Gastrocnemius medialis (tissue), 4 donors: ENCODE measurements at regions of chr16 and their contacts with region 1.

Region 1: DNA sequence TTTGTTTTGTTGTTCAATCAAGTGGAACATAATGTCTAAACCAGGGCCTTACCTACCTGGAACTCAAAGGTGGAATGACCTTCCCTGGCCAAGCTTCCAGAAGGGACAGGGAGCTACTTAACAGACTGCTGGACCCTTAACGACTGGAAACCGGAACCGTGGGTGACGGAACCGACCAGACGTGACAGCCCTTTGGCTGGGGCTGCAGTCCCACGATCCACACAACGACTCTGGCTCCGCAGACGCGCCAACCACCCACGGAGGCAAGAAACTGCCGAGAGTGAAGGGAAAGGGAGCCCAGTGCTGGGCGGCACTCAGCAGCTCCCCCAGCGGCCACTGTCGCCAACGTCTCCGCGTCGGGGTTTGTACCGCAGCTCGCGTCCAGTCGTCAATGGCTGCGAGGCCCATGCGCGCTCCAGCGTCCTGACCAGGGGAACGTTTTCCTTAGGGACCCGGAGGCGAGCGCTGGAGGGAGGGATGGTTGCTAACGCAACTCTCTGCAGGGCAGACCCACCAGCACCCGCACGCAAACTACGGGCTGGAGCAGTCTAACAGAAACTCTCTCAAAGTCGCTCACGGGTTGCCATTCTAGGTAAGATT is 5.5 kb upstream of the KIF22 start:
- DNase-seq: peak; percentile 37 to 57
- ATAC-seq: peak; percentile 76 to 83
- H3K4me3 ChIP-seq: peak overlapping the region; percentile 27 to 57 (median 35)
- H3K27ac ChIP-seq: no peak overlapping the region
- H3K4me1 ChIP-seq: peaks cover 6 to 15% of the 10 kb centered on the region in 2 donors
- H3K27me3 ChIP-seq: peaks cover 0 to 5% (median 0%) of the 10 kb centered on the region in 3 donors
- CTCF ChIP-seq: peak; percentile 71 to 90 (median 77)
- POLR2A ChIP-seq: no peak

Region 2: DNA sequence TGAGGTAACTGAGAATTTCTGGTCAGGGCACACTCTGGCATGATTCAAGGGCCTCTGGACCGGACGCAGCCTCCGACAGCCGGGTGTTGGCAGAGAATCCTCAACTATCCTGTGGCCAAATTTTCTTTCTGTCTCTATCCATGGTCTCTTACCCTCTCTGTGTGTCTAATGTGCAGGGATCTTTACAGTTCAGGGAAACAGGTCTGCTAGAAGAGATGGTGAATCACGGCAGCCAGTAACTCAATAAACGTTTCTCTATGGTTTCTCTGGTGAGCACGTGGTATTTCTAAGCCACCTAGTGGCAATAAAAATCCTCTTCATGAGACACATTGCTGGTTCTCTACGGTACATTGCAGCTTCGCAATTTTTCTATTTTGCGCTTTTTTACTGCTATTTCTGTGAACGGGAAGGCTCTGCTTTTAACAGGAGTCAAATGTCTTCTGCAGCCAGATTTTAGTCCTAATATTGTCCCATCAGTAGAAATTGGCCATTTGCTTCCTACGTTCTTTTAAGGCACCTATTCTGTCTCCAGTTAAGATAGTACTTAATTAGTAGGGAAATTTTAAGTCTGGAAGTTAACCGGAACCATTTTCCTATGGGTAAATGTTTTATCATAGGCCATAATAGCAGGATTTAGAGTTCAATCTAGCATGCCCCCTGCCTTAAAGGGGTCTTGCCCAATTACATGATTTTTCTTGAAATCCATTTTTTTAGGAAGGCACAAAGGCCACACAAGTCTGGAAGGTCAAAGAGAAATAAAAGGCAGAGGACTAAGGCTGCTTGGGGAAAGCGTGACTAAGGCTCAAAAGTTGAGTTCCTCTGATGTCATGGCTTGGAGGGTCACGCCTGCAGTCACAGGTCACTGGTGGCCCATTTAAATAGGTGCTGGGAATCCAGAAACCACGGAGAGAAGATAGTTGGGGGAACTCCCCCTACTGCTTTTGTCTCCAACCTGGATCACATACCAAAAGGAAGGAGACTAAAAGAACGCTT is 74.5 kb before region 1 on chr16:
- in situ Hi-C with region 1: loop called in 1 of 4 experiments (anchors 10 kb)
- intact Hi-C with region 1: no loop called
- DNase-seq: no peak
- ATAC-seq: peak; percentile 93 to 100
- H3K4me3 ChIP-seq: peak overlapping the region in 2 of 4 donors; percentile 19 to 25
- H3K27ac ChIP-seq: no peak overlapping the region
- H3K4me1 ChIP-seq: peaks cover 0 to 3% of the 10 kb centered on the region in 2 donors
- H3K27me3 ChIP-seq: no peaks in the 10 kb centered on the region
- CTCF ChIP-seq: peak; percentile 58 to 69 (median 64)
- POLR2A ChIP-seq: no peak